Endothelial cell of umbilical vein (primary cell): ENCODE measurements at regions of chr6 and their contacts with region 1.

Region 1: DNA sequence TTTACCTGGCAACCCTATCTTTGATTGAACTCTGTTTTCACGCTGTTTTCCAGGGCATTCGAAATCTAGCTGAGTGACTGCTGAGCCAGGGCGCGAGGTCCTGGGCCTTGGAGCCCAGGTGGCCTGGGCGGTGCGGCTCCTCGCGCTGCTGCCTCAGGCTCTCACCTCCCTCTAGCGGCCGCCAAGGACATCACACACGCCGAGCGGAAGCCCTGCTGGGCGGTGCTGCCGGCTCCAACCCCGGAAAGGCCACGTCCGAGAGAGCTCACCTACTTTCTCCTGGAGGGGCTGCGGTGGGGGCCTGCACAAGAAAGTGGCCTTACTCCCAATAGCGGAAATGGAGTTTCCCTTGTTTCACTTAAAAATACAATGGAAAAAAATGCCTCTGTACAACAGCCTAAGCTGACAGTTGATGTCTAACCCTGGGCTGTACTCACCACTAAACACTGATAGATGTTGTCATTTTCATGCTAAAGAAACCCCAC is 77.7 kb downstream of the ELOVL4 start:
- DNase-seq: peak; percentile 64
- H3K4me3 ChIP-seq: no peak overlapping the region
- H3K27ac ChIP-seq: no peak overlapping the region
- H3K4me1 ChIP-seq: no peaks in the 10 kb centered on the region
- H3K27me3 ChIP-seq: peaks cover 7% of the 10 kb centered on the region in 2 experiments
- CTCF ChIP-seq: peak; percentile 92 to 99
- POLR2A ChIP-seq: no peak

Region 2: GRCh38 chr6:79040083-79040482 is 829.6 kb before region 1 on chr6:
- CTCF ChIA-PET with region 1: no interaction called
- POLR2A ChIA-PET with region 1: no interaction called
- dilution Hi-C with region 1: no loop called
- intact Hi-C with region 1: no loop called
- DNase-seq: no peak
- H3K4me3 ChIP-seq: no peak overlapping the region
- H3K27ac ChIP-seq: no peak overlapping the region
- H3K4me1 ChIP-seq: no peaks in the 10 kb centered on the region
- H3K27me3 ChIP-seq: no peaks in the 10 kb centered on the region
- CTCF ChIP-seq: no peak
- POLR2A ChIP-seq: no peak

Region 3: GRCh38 chr6:79687759-79688158 is 181.9 kb before region 1 on chr6:
- CTCF ChIA-PET with region 1: no interaction called
- POLR2A ChIA-PET with region 1: no interaction called
- dilution Hi-C with region 1: no loop called
- intact Hi-C with region 1: no loop called
- DNase-seq: no peak
- H3K4me3 ChIP-seq: no peak overlapping the region
- H3K27ac ChIP-seq: no peak overlapping the region
- H3K4me1 ChIP-seq: no peaks in the 10 kb centered on the region
- H3K27me3 ChIP-seq: no peaks in the 10 kb centered on the region
- CTCF ChIP-seq: no peak
- POLR2A ChIP-seq: no peak

Region 4: DNA sequence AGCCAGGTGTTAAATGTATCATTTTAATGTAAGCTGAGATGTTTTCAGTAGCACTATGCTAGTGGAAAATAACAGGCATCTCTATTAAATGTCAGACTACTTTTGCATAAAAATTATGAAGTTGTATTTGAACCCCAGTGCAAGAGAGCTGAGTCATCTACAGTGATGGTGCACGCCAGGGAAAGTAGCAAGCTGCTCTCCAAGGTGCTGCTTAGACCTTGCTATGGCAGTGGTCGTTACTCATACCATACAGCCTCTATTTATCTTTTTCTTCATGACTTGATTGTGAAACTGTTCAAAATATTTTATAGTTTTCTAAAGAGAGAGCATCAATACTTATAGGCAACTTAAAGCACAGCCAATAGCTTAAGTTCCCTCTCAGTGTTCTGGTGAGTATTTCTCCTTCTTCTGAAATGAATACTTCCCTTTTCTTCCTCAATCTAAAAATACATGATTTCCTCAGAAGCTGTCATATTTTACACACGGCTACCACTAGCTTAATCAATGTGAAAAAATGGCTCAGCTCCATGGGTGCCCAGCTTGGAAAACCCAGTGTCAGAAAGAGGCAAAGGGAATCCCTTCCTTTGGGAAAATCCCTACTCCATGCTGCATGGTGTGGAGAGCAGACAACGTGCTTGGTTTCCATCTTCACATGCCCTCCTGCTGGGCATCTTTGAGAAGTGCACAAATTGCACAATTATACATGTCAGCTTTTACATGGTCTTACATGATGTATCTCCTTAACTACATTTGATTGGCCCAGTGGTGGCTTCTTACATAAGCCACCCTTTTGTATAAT is 27.9 kb before region 1 on chr6:
- CTCF ChIA-PET with region 1: interaction called, 13 read pairs
- POLR2A ChIA-PET with region 1: no interaction called
- dilution Hi-C with region 1: no loop called
- intact Hi-C with region 1: no loop called
- DNase-seq: no peak
- H3K4me3 ChIP-seq: no peak overlapping the region
- H3K27ac ChIP-seq: no peak overlapping the region
- H3K4me1 ChIP-seq: no peaks in the 10 kb centered on the region
- H3K27me3 ChIP-seq: peaks cover 0 to 3% of the 10 kb centered on the region in 2 experiments
- CTCF ChIP-seq: peak in 1 of 2 donors; percentile 1
- POLR2A ChIP-seq: no peak

Region 5: GRCh38 chr6:79949233-79949632 is 79.6 kb after region 1 on chr6:
- CTCF ChIA-PET with region 1: interaction called, 12 read pairs
- POLR2A ChIA-PET with region 1: no interaction called
- dilution Hi-C with region 1: no loop called
- intact Hi-C with region 1: loop called (anchors 2 kb)
- DNase-seq: peak; percentile 53
- H3K4me3 ChIP-seq: no peak overlapping the region
- H3K27ac ChIP-seq: no peak overlapping the region
- H3K4me1 ChIP-seq: peaks cover 13% of the 10 kb centered on the region
- H3K27me3 ChIP-seq: peaks cover 8 to 31% of the 10 kb centered on the region in 2 experiments
- CTCF ChIP-seq: peak; percentile 41 to 49
- POLR2A ChIP-seq: no peak

Region 6: DNA sequence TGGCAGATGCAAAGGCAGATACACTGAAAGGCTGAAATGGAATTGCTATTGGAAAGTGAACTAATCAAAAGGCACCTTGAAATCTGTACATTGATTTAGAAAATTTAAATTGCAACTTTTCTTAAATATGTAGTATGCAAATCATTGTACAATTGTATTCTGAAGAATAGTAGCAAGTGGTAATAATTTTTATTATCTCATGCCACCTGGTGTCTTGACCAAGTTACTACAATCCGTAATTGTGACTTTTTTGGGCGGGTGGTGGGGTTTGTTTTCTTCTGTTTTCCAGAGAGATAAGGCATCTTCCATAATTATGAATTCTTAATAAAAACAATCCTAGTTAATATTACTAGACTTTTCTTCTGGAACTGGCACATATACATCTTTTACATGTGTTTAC is 224.4 kb after region 1 on chr6:
- CTCF ChIA-PET with region 1: interaction called, 6 read pairs
- POLR2A ChIA-PET with region 1: no interaction called
- dilution Hi-C with region 1: no loop called
- intact Hi-C with region 1: loop called (anchors 1 kb)
- DNase-seq: peak; percentile 38
- H3K4me3 ChIP-seq: no peak overlapping the region
- H3K27ac ChIP-seq: no peak overlapping the region
- H3K4me1 ChIP-seq: no peaks in the 10 kb centered on the region
- H3K27me3 ChIP-seq: peaks cover 5 to 18% of the 10 kb centered on the region in 2 experiments
- CTCF ChIP-seq: peak; percentile 32 to 33
- POLR2A ChIP-seq: no peak